Natural killer cell (primary cell): ENCODE measurements at regions of chr14 and their contacts with region 1.

Region 1: GRCh38 chr14:89586258-89587135 is 169.5 kb upstream of the FOXN3 start:
- DNase-seq: peak in 1 of 2 donors; percentile 61
- ATAC-seq: peak; percentile 64 to 91 (median 69)
- H3K4me3 ChIP-seq: no peak overlapping the region
- H3K4me3 Mint-ChIP-seq: peak overlapping the region; percentile 29
- H3K27ac ChIP-seq: no peak overlapping the region
- H3K27ac Mint-ChIP-seq: peak overlapping the region; percentile 57 to 60
- H3K4me1 ChIP-seq: peaks cover 27% of the 10 kb centered on the region
- H3K4me1 Mint-ChIP-seq: peaks cover 76 to 84% of the 10 kb centered on the region in 2 donors
- H3K27me3 ChIP-seq: no peaks in the 10 kb centered on the region
- H3K27me3 Mint-ChIP-seq: no peaks in the 10 kb centered on the region
- CTCF ChIP-seq: no peak

Region 2: GRCh38 chr14:89625244-89625713 is 38.8 kb after region 1 on chr14:
- intact Hi-C with region 1: loop called (anchors 2 kb)
- DNase-seq: no peak
- ATAC-seq: no peak
- H3K4me3 ChIP-seq: no peak overlapping the region
- H3K4me3 Mint-ChIP-seq: peak overlapping the region; percentile 40
- H3K27ac ChIP-seq: peak overlapping the region; percentile 85
- H3K27ac Mint-ChIP-seq: peak overlapping the region; percentile 90 to 95
- H3K4me1 ChIP-seq: peaks cover 33% of the 10 kb centered on the region
- H3K4me1 Mint-ChIP-seq: peaks cover 52 to 56% of the 10 kb centered on the region in 2 donors
- H3K27me3 ChIP-seq: no peaks in the 10 kb centered on the region
- H3K27me3 Mint-ChIP-seq: no peaks in the 10 kb centered on the region
- CTCF ChIP-seq: no peak